Right ventricle myocardium inferior (tissue), 1 donor: ENCODE measurements at regions of chr3 and their contacts with region 1.

Region 1: DNA sequence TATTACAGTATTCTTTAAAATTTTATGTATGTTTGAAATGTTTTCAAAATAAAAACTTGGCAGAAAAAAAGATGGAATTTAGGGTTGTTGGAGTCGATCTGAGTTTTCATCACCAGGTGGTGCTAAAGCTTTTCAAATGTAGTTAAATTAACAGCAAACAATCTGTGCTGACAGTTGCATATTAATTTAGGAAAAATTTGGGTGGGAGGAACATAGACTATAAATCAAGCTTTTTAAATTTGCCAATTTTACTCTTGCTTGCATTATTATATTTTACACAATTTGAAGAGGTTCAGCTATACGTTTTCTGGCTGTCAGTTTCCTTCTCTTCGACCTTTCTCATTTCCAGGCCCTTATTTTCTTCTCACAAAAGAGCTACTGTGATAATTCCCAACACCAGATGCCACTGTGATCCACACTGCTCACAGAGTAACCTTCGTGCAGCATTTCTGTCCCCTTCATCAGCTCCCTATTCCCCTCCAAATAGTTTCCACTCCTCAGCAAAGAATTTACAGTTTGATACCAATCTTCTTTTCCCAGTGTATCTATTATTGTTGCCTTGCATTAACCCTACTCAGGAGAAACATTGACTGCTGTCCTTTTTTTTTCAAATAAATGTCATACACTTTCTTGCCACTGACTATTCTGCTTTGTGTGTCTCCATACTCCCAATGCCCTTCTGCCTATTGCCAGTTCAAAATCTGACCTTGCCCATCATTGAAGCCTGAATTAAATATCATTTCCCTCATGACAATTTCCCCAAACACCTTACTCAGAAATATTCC is 53.4 kb upstream of the EIF5A2 start:
- DNase-seq: no peak
- ATAC-seq: no peak

Region 2: DNA sequence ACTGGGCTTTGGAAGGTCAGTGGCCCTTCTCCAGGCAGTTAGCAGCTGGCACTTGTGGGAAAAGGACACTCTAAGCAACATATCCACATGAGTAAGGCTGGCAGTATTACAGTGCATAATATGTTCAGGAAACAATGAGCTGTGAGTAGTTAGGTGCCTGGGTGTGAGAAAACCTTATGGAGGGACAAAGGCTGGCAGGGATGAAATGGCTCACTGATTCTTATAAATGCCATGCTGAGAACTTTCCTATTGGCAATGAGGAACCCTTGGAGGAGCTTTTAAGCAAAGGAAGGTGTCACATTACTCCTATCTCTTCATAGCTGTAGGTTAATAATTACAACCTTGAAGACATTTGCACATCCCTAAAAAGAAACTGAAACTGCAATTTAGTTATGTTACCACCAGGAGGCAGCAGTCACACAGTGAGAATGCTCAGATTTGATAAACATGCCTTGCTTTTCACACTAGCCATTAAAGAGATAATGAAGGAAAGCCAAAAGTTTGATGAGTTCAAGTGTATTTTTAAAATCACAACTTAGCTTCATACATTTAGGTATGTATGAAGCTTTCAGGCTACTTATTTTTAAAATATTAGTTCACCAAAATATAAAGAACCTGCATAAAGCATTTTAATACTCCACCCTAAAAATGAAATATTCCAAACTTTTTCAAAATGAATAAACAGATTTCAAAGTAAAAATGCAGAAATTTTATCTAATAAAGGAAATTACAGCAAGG is 201.3 kb after region 1 on chr3:
- intact Hi-C with region 1: loop called (anchors 10 kb)
- DNase-seq: no peak
- ATAC-seq: no peak